ENCODE measurements at regions of chr15 and their contacts with region 1.

Region 1: GRCh38 chr15:88913017-88913849 is at the start of gene MFGE8:
- DNase-seq: peak; percentile 89
- ATAC-seq: peak; percentile 82
- total RNA-seq, gene MFGE8: 321 TPM

Region 2: GRCh38 chr15:88745696-88746095 is 167.5 kb before region 1 on chr15:
- intact Hi-C with region 1: no loop called
- DNase-seq: no peak
- ATAC-seq: no peak

Region 3: GRCh38 chr15:88932271-88932874 is 19.1 kb after region 1 on chr15:
- intact Hi-C with region 1: loop called (anchors 2 kb)
- DNase-seq: no peak
- ATAC-seq: peak; percentile 94

Region 4: GRCh38 chr15:88954431-88955277 is 41.4 kb after region 1 on chr15:
- intact Hi-C with region 1: no loop called
- DNase-seq: no peak
- ATAC-seq: peak; percentile 71